Breast epithelium (tissue), 4 donors: ENCODE measurements at regions of chr4 and their contacts with region 1.

Region 1: GRCh38 chr4:14671146-14671545 is 331.1 kb upstream of the CPEB2 start:
- DNase-seq: no peak
- H3K4me3 ChIP-seq: no peak overlapping the region
- H3K27ac ChIP-seq: no peak overlapping the region
- H3K4me1 ChIP-seq: no peaks in the 10 kb centered on the region
- H3K27me3 ChIP-seq: no peaks in the 10 kb centered on the region
- CTCF ChIP-seq: no peak
- POLR2A ChIP-seq: no peak

Region 2: GRCh38 chr4:14607578-14607977 is 63.6 kb before region 1 on chr4:
- intact Hi-C with region 1: loop called (anchors 2 kb)
- DNase-seq: no peak
- H3K4me3 ChIP-seq: no peak overlapping the region
- H3K27ac ChIP-seq: no peak overlapping the region
- H3K4me1 ChIP-seq: no peaks in the 10 kb centered on the region
- H3K27me3 ChIP-seq: no peaks in the 10 kb centered on the region
- CTCF ChIP-seq: no peak
- POLR2A ChIP-seq: no peak